ENCODE measurements at regions of chr19 and their contacts with region 1.

Region 1: GRCh38 chr19:41366089-41366488 is 2.1 kb upstream of the B9D2 start:
- DNase-seq: no peak
- ATAC-seq: no peak
- H3K4me3 ChIP-seq: no peak overlapping the region
- H3K27ac ChIP-seq: no peak overlapping the region
- H3K4me1 ChIP-seq: peaks cover 3% of the 10 kb centered on the region
- H3K27me3 ChIP-seq: no peaks in the 10 kb centered on the region
- CTCF ChIP-seq: no peak

Region 2: DNA sequence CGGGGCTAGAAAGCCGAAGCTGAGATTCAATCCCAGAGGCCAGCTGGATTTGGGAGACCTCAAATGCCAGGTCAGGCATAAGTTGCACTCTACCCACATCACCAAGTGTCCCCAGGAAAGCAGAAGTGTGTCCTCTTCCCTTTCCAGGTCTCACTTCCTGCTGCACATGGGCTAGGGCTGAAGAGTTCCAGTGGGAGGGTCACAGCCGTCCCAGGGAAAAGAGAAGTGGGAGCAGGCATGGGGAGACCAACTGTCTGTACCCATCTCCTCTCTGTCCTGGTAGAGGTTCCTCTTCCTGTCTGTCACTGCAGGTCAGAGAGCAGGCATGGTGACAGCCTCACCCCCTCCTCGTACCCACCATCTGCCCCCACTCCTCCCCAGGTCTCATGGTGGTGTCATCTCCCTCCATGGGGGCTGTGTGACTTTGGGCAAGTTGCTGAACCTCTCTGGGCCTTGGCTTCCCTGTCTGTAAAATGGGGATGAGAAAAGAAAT is 132.3 kb before region 1 on chr19:
- CTCF ChIA-PET with region 1: no interaction called
- POLR2A ChIA-PET with region 1: no interaction called
- in situ Hi-C with region 1: no loop called
- intact Hi-C with region 1: no loop called
- DNase-seq: no peak
- ATAC-seq: no peak
- H3K4me3 ChIP-seq: no peak overlapping the region
- H3K27ac ChIP-seq: no peak overlapping the region
- H3K4me1 ChIP-seq: peaks cover 3% of the 10 kb centered on the region; the same call in 1 of the 2 replicates
- H3K27me3 ChIP-seq: no peaks in the 10 kb centered on the region
- CTCF ChIP-seq: no peak

Region 3: GRCh38 chr19:41426952-41427646 is 61.0 kb after region 1 on chr19 and contains the start of gene B3GNT8:
- CTCF ChIA-PET with region 1: no interaction called
- POLR2A ChIA-PET with region 1: interaction called, 16 read pairs
- in situ Hi-C with region 1: no loop called
- intact Hi-C with region 1: no loop called
- DNase-seq: no peak
- ATAC-seq: peak; percentile 57
- H3K4me3 ChIP-seq: no peak within 1 kb of the TSS
- H3K27ac ChIP-seq: no peak within 1 kb of the TSS
- H3K4me1 ChIP-seq: no peaks in the 10 kb centered on the region
- H3K27me3 ChIP-seq: no peaks in the 10 kb centered on the region
- CTCF ChIP-seq: no peak
- total RNA-seq, gene B3GNT8: 0.10 TPM

Region 4: DNA sequence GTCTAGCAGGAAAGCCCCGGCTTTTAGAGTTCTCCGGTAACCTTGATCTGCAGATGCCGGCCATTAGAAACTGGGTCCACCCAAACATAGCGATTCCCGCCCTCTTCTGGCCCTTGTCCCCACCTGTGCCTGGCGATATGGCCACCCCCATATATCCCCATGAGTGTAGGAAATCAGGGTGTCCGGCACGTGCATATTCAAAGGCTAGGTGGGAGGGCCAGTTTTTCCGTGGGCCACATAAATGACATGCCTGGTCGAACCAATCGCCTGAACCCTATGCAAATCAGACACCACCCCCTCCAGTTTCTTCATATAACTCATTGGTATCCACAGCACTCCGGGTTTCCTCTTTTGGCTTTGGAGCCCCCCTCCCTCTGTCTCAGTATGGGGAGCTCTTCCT is 114.2 kb after region 1 on chr19:
- CTCF ChIA-PET with region 1: no interaction called
- POLR2A ChIA-PET with region 1: no interaction called
- in situ Hi-C with region 1: no loop called
- intact Hi-C with region 1: no loop called
- DNase-seq: no peak
- ATAC-seq: no peak
- H3K4me3 ChIP-seq: no peak overlapping the region
- H3K27ac ChIP-seq: no peak overlapping the region
- H3K4me1 ChIP-seq: no peaks in the 10 kb centered on the region
- H3K27me3 ChIP-seq: peaks cover 5% of the 10 kb centered on the region
- CTCF ChIP-seq: no peak

Region 5: GRCh38 chr19:41541990-41542584 is 176.0 kb after region 1 on chr19:
- CTCF ChIA-PET with region 1: no interaction called
- POLR2A ChIA-PET with region 1: no interaction called
- in situ Hi-C with region 1: no loop called
- intact Hi-C with region 1: no loop called
- DNase-seq: no peak
- ATAC-seq: no peak
- H3K4me3 ChIP-seq: no peak overlapping the region
- H3K27ac ChIP-seq: no peak overlapping the region
- H3K4me1 ChIP-seq: no peaks in the 10 kb centered on the region
- H3K27me3 ChIP-seq: no peaks in the 10 kb centered on the region
- CTCF ChIP-seq: peak; percentile 76

Region 6: DNA sequence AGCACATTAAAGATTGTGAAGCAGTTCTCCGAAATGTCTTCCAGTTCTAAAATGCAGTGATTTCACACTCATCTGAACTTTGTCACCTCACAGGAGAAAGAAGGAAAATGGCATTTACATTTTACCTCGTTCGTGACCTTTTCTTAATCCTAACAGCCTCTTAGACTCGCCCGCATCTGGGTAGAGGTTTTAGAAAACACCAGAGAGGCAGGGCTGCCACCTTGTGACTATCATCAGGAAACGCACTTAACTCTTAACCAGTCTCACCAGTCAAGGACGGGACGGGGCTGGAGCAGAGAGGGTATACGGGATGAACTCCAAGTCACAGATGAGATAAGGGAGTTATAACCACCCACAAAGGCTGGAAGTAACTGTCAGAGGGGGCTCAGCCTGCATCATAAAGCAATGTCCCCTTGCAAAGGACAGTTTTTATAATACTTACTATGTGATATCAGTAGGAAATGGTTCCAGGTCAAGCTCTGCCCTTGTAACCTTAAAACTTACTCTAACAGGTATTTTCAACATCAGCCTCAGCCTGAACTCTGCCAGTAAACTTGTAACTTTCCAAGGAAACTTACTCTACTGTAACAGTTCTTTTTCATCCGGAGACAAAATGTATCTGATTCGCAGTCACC is 380.6 kb after region 1 on chr19:
- CTCF ChIA-PET with region 1: no interaction called
- POLR2A ChIA-PET with region 1: no interaction called
- in situ Hi-C with region 1: no loop called
- intact Hi-C with region 1: no loop called
- DNase-seq: no peak
- ATAC-seq: peak; percentile 96
- H3K4me3 ChIP-seq: no peak overlapping the region
- H3K27ac ChIP-seq: no peak overlapping the region
- H3K4me1 ChIP-seq: no peaks in the 10 kb centered on the region
- H3K27me3 ChIP-seq: no peaks in the 10 kb centered on the region; the same call in 1 of the 2 replicates
- CTCF ChIP-seq: peak; percentile 80

Region 7: GRCh38 chr19:42370626-42371170 is 1004.6 kb after region 1 on chr19:
- CTCF ChIA-PET with region 1: no interaction called
- POLR2A ChIA-PET with region 1: interaction called, 10 read pairs
- in situ Hi-C with region 1: no loop called
- intact Hi-C with region 1: no loop called
- DNase-seq: no peak
- ATAC-seq: no peak
- H3K4me3 ChIP-seq: no peak overlapping the region
- H3K27ac ChIP-seq: no peak overlapping the region
- H3K4me1 ChIP-seq: no peaks in the 10 kb centered on the region
- H3K27me3 ChIP-seq: no peaks in the 10 kb centered on the region
- CTCF ChIP-seq: no peak